Right ventricle myocardium inferior (tissue), 1 donor: ENCODE measurements at regions of chr20 and their contacts with region 1.

Region 1: GRCh38 chr20:62875419-62876361 is 14.1 kb upstream of the TCFL5 start:
- DNase-seq: peak; percentile 88
- ATAC-seq: peak; percentile 85

Region 2: GRCh38 chr20:62466806-62467537 is 408.7 kb before region 1 on chr20:
- intact Hi-C with region 1: no loop called
- DNase-seq: no peak
- ATAC-seq: no peak

Region 3: GRCh38 chr20:62595491-62595890 is 280.2 kb before region 1 on chr20:
- intact Hi-C with region 1: no loop called
- DNase-seq: peak; percentile 74
- ATAC-seq: no peak

Region 4: GRCh38 chr20:62926239-62927104 is 50.8 kb after region 1 on chr20 and contains the start of gene DIDO1:
- intact Hi-C with region 1: loop called (anchors 5 kb)
- DNase-seq: peak; percentile 95
- ATAC-seq: peak; percentile 95
- total RNA-seq, gene DIDO1: 33.5 TPM